Esophagus squamous epithelium (tissue), 5 donors: ENCODE measurements at regions of chr10 and their contacts with region 1.

Region 1: GRCh38 chr10:122298598-122299301 is 27.7 kb downstream of the BTBD16 start:
- DNase-seq: no peak
- H3K4me3 ChIP-seq: peak overlapping the region in 2 of 4 donors; percentile 7 to 48
- H3K27ac ChIP-seq: peak overlapping the region in 1 of 4 donors; percentile 17
- H3K4me1 ChIP-seq: peaks cover 0 to 31% (median 8%) of the 10 kb centered on the region in 3 donors
- H3K27me3 ChIP-seq: no peaks in the 10 kb centered on the region
- CTCF ChIP-seq: peak; percentile 70 to 95 (median 92)
- POLR2A ChIP-seq: no peak

Region 2: GRCh38 chr10:122435212-122435827 is 136.6 kb after region 1 on chr10:
- intact Hi-C with region 1: loop called (anchors 5 kb)
- DNase-seq: no peak
- H3K4me3 ChIP-seq: no peak overlapping the region
- H3K27ac ChIP-seq: no peak overlapping the region
- H3K4me1 ChIP-seq: no peaks in the 10 kb centered on the region
- H3K27me3 ChIP-seq: no peaks in the 10 kb centered on the region
- CTCF ChIP-seq: peak; percentile 43 to 85 (median 72)
- POLR2A ChIP-seq: no peak

Region 3: GRCh38 chr10:122565728-122566206 is 267.0 kb after region 1 on chr10:
- intact Hi-C with region 1: loop called (anchors 5 kb)
- DNase-seq: no peak
- H3K4me3 ChIP-seq: peak overlapping the region in 3 of 4 donors; percentile 26 to 49 (median 27)
- H3K27ac ChIP-seq: no peak overlapping the region
- H3K4me1 ChIP-seq: peaks cover 0 to 7% (median 0%) of the 10 kb centered on the region in 3 donors
- H3K27me3 ChIP-seq: peaks cover 0 to 41% (median 0%) of the 10 kb centered on the region in 4 donors
- CTCF ChIP-seq: peak; percentile 56 to 83 (median 82)
- POLR2A ChIP-seq: no peak